OCI-LY7 (cell line): ENCODE measurements at regions of chr17 and their contacts with region 1.

Region 1: GRCh38 chr17:39174907-39175694 is 9.1 kb upstream of the ARL5C start:
- DNase-seq: peak; percentile 91
- H3K4me3 ChIP-seq: no peak overlapping the region
- H3K27ac ChIP-seq: peak overlapping the region; percentile 89
- H3K4me1 ChIP-seq: peaks cover 52% of the 10 kb centered on the region
- CTCF ChIP-seq: peak; percentile 94

Region 2: GRCh38 chr17:39164675-39165143 is 10.4 kb before region 1 on chr17:
- CTCF ChIA-PET with region 1: interaction called, 22 read pairs
- POLR2A ChIA-PET with region 1: interaction called, 6 read pairs
- intact Hi-C with region 1: no loop called
- DNase-seq: peak; percentile 85
- H3K4me3 ChIP-seq: peak overlapping the region; percentile 62
- H3K27ac ChIP-seq: peak overlapping the region; percentile 17
- H3K4me1 ChIP-seq: peaks cover 51% of the 10 kb centered on the region
- CTCF ChIP-seq: peak; percentile 93

Region 3: GRCh38 chr17:39199820-39200069 is 24.6 kb after region 1 on chr17:
- CTCF ChIA-PET with region 1: interaction called, 5 read pairs
- POLR2A ChIA-PET with region 1: interaction called, 5 read pairs
- intact Hi-C with region 1: loop called (anchors 2 kb)
- DNase-seq: peak; percentile 98
- H3K4me3 ChIP-seq: peak overlapping the region; percentile 91
- H3K27ac ChIP-seq: peak overlapping the region; percentile 88
- H3K4me1 ChIP-seq: peaks cover 73% of the 10 kb centered on the region
- CTCF ChIP-seq: no peak